AG04450 (cell line): ENCODE measurements at regions of chr15 and their contacts with region 1.

Region 1: DNA sequence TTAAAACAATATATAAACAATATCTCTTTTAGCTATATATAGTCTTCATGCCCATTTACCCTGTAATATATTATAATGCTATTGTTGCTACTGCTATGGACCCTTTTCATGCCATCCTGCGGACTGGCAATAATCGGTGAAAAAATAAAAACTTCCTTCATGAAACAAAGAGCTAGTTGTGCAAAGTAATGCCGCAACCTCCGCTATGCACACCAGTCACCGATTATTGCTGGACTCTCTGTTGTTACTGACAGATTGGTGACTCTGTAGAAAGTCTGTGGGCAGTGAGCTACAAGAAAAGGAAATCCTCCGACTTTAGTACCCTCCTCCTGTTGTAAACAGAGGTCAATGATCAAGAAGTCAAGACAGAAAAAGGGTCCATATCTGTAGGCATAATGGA is 17.9 kb upstream of the ICE2 start:
- DNase-seq: no peak
- H3K4me3 ChIP-seq: no peak overlapping the region
- H3K27ac ChIP-seq: no peak overlapping the region
- H3K27me3 ChIP-seq: no peaks in the 10 kb centered on the region
- CTCF ChIP-seq: no peak

Region 2: DNA sequence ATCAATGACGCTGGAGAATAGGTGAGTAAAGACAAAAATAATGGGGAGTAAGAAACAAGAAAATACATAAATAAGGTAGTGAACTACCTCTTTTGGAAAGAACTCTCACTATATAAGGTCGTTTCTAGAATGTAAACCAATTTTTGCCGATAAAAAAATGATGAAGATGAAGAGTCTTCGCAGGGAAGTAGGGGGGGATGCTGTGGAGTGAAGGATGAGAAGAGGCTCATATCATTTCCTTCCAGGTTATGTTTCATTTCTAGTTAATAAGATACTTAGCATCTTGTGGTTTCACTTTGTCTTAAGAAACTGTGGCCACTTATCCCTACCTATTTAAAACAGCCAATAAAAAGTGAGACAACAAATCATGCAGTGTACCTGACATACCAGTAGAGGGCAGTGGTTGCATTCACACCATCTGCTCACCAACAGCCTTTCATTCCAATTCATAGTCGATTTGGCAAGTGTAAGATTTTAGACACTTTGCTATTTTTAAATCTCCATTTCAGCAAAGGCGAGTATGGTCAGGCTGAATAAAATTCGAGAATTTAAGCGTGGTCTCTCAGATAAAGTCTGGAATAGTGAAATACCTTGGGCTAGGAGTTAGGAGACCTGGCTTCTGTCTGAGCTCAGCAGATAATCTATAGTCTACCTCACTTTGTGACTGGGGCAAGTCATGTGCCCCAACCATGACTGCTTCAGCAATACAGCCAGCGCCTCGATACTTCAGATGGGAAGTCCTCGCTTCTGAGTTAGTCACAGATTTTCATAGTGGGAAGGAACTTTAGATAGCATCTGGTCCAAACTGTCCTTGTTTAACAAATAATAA is 11.0 kb after region 1 on chr15:
- CTCF ChIA-PET with region 1: interaction called, 16 read pairs
- POLR2A ChIA-PET with region 1: no interaction called
- DNase-seq: peak; percentile 38
- H3K4me3 ChIP-seq: no peak overlapping the region
- H3K27ac ChIP-seq: no peak overlapping the region
- H3K27me3 ChIP-seq: no peaks in the 10 kb centered on the region
- CTCF ChIP-seq: peak; percentile 98